Endothelial cell of umbilical vein (primary cell): ENCODE measurements at regions of chr10 and their contacts with region 1.

Region 1: GRCh38 chr10:49761789-49762565 is at the start of gene OGDHL:
- DNase-seq: peak; percentile 58
- H3K4me3 ChIP-seq: peak within 1 kb of the TSS; percentile 44 to 55 (median 48)
- H3K27ac ChIP-seq: no peak within 1 kb of the TSS
- H3K4me1 ChIP-seq: peaks cover 3% of the 10 kb centered on the region
- H3K27me3 ChIP-seq: peaks cover 0 to 5% of the 10 kb centered on the region in 2 experiments
- CTCF ChIP-seq: no peak
- POLR2A ChIP-seq: no peak
- total RNA-seq, gene OGDHL: 0.58 and 1.0 TPM in 2 replicates

Region 2: GRCh38 chr10:49606981-49607535 is 154.9 kb before region 1 on chr10:
- CTCF ChIA-PET with region 1: no interaction called
- POLR2A ChIA-PET with region 1: no interaction called
- dilution Hi-C with region 1: no loop called
- intact Hi-C with region 1: loop called (anchors 2 kb)
- DNase-seq: peak; percentile 60
- H3K4me3 ChIP-seq: no peak overlapping the region
- H3K27ac ChIP-seq: no peak overlapping the region
- H3K4me1 ChIP-seq: no peaks in the 10 kb centered on the region
- H3K27me3 ChIP-seq: peaks cover 41 to 48% of the 10 kb centered on the region in 2 experiments
- CTCF ChIP-seq: no peak
- POLR2A ChIP-seq: no peak